Activated T-helper 2 cell treated with anti-CD3 and anti-CD28 coated beads, Interferon-gamma antibody, Interleukin-2, Interleukin-4, amounts not matched to agents 10 μg/mL and 5 μg/mL and 100 μg/mL, durations not matched to agents 14 hours and 24 hours and 36 hours (primary cell): ENCODE measurements at regions of chr1 and their contacts with region 1.

Region 1: DNA sequence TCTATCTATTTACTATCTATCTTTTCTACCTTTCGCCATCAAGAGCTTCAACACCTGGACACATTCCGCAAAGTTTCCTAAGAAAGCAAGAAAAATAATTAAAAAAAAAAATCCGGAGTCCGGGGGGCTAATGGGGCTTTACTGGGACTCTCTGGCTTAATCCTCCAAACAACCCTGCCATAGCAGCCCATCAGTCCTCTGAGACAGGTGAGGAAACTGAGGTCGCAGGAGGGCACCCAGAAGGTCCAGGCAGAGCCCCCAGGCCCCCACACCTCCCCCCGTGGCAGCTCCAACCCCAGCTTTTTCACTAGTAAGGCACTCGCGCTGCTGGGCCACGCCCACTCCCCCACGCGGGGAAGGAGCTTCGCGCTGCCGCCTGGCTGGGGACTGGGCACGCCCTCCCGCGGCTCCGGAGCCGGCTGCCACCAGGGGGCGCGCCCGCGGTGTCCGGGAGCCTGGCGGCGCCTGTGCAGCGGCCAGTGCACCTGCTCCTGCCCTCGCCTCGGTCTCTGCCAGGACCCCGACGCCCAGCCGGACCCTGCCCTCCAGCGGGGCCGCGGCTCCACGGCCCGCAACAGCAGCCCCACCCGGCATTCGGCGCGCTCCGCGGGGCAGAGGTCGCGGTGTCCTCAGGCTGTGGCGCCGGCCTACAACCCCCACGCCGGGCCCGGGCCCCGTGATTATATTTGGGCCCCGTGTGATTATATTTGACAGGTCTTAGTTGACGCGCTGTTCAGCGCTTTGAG is 54.1 kb upstream of the SAMD11 start:
- DNase-seq: peak; percentile 77
- H3K4me3 Mint-ChIP-seq: no peak overlapping the region
- H3K27ac Mint-ChIP-seq: no peak overlapping the region
- H3K4me1 Mint-ChIP-seq: peaks cover 5% of the 10 kb centered on the region
- H3K27me3 Mint-ChIP-seq: peaks cover 36% of the 10 kb centered on the region

Region 2: GRCh38 chr1:831522-831921 is 38.1 kb before region 1 on chr1:
- intact Hi-C with region 1: no loop called
- DNase-seq: no peak
- H3K4me3 Mint-ChIP-seq: no peak overlapping the region
- H3K27ac Mint-ChIP-seq: no peak overlapping the region
- H3K4me1 Mint-ChIP-seq: peaks cover 14% of the 10 kb centered on the region
- H3K27me3 Mint-ChIP-seq: peaks cover 1% of the 10 kb centered on the region

Region 3: DNA sequence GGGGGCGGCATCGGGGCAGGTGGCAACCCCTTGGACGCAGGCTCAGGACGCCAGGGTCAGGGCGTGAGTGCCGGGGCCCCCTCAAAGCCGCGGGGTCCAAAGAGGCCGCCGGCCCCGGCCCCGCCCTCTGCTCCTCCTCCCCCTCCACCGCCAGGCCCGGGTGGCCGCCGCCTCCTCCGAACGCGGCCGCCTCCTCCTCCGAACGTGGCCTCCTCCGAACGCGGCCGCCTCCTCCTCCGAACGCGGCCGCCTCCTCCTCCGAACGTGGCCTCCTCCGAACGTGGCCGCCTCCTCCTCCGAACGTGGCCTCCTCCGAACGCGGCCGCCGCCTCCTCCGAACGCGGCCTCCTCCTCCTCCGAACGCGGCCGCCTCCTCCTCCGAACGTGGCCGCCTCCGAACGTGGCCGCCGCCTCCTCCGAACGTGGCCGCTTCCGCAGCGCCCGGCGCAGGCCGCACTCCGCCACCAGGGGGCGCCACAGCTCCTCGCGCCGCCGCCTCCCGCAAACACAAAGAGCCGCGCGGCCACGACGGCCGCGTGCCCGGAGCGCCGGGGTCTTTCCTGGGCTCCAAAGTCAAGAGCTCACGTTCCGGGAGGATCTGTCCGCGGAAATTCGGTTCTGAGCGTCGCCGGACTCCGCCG is 34.8 kb after region 1 on chr1:
- intact Hi-C with region 1: no loop called
- DNase-seq: peak; percentile 83
- H3K4me3 Mint-ChIP-seq: peak overlapping the region; percentile 21
- H3K27ac Mint-ChIP-seq: no peak overlapping the region
- H3K4me1 Mint-ChIP-seq: peaks cover 5% of the 10 kb centered on the region
- H3K27me3 Mint-ChIP-seq: peaks cover 60% of the 10 kb centered on the region

Region 4: DNA sequence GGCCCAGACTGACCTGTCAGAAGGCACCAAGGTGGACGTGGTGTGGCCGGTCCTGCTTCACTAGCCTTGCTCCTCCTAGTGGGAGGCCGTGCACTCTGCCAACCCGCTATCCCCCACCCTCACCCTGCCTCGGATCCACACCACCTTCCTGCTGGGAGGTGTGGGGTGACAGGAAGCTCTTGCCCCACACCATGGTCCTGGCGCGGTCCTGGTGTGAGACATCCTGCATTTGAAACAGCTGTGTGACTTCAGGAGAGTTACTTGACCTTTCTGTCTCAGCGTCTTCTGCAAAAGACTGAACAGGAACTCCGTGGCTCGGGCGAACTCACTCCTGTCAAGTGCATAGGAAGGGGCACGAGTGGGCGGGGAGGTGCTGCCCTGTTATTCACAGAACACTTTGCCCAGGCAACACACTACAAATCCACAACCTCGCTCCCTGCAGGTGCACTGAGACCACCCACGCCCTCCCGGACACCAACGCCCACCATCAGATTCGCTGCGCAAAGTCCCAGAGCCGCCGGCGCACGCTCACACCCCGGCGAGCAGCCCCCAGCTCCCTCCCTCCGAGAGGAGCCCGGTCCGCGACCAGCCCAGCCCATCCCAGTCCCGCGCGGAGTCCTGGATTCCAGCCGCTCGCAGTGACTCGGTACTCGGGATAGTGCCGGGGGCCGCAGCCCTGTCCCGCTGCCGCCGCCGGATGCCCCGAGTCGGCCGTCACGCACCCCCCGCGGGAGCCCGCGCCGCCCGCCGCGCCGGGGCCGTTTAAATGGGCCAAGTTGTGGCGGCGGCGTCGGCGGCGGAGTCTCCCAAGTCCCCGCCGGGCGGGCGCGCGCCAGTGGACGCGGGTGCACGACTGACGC is 53.7 kb after region 1 on chr1 and contains the start of gene SAMD11:
- intact Hi-C with region 1: loop called (anchors 2 kb)
- DNase-seq: peak; percentile 32
- H3K4me3 Mint-ChIP-seq: peak within 1 kb of the TSS; percentile 47
- H3K27ac Mint-ChIP-seq: no peak within 1 kb of the TSS
- H3K4me1 Mint-ChIP-seq: peaks cover 4% of the 10 kb centered on the region
- H3K27me3 Mint-ChIP-seq: peaks cover 48% of the 10 kb centered on the region
- total RNA-seq, gene SAMD11: not detected in 2 replicates